ENCODE measurements at regions of chr16 and their contacts with region 1.

Region 1: GRCh38 chr16:3408561-3409197 is 7.7 kb downstream of the ZNF174 start:
- DNase-seq: no peak
- H3K4me3 ChIP-seq: no peak overlapping the region
- H3K27ac ChIP-seq: no peak overlapping the region
- H3K4me1 ChIP-seq: no peaks in the 10 kb centered on the region
- H3K27me3 ChIP-seq: no peaks in the 10 kb centered on the region
- CTCF ChIP-seq: no peak

Region 2: GRCh38 chr16:3374385-3374784 is 34.3 kb before region 1 on chr16:
- CTCF ChIA-PET with region 1: no interaction called
- dilution Hi-C with region 1: loop called (anchors 5 kb)
- in situ Hi-C with region 1: no loop called
- intact Hi-C with region 1: no loop called
- DNase-seq: no peak
- H3K4me3 ChIP-seq: no peak overlapping the region
- H3K27ac ChIP-seq: no peak overlapping the region
- H3K4me1 ChIP-seq: no peaks in the 10 kb centered on the region
- H3K27me3 ChIP-seq: no peaks in the 10 kb centered on the region
- CTCF ChIP-seq: no peak